PC-9 (cell line): ENCODE measurements at regions of chr4 and their contacts with region 1.

Region 1: DNA sequence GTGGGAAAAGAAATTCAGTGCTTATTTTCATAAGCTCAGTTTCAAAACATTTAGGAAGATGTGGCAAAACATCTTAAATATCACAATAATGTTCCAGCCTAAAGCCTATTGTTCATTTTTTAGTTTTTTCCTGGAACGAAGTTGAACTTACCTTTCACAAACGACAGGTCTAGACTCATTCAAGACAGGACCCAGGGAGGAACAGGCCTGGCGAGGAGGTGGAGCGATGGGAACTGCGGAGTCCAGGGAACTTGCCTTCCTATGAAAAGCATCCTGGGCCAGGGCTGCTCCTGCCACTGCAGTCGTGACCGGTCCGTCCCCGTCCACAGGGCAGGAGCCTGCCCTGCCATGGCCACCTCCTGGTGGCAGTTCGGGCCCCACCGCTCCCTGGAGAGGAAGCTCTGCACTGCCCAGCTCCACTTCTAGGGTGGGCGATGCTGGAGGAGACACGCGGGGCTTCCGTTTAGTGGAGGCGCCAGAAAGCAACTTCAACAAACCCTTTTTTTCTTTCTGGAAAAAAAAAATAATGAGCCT is 96.7 kb upstream of the CBR4 start:
- DNase-seq: no peak
- H3K4me3 ChIP-seq: no peak overlapping the region
- H3K27ac ChIP-seq: no peak overlapping the region
- H3K4me1 ChIP-seq: 0 out of 2 replicates have a peak, but pooled peaks cover 12% of the 10 kb centered on the region
- H3K27me3 ChIP-seq: no peaks in the 10 kb centered on the region
- CTCF ChIP-seq: no peak

Region 2: DNA sequence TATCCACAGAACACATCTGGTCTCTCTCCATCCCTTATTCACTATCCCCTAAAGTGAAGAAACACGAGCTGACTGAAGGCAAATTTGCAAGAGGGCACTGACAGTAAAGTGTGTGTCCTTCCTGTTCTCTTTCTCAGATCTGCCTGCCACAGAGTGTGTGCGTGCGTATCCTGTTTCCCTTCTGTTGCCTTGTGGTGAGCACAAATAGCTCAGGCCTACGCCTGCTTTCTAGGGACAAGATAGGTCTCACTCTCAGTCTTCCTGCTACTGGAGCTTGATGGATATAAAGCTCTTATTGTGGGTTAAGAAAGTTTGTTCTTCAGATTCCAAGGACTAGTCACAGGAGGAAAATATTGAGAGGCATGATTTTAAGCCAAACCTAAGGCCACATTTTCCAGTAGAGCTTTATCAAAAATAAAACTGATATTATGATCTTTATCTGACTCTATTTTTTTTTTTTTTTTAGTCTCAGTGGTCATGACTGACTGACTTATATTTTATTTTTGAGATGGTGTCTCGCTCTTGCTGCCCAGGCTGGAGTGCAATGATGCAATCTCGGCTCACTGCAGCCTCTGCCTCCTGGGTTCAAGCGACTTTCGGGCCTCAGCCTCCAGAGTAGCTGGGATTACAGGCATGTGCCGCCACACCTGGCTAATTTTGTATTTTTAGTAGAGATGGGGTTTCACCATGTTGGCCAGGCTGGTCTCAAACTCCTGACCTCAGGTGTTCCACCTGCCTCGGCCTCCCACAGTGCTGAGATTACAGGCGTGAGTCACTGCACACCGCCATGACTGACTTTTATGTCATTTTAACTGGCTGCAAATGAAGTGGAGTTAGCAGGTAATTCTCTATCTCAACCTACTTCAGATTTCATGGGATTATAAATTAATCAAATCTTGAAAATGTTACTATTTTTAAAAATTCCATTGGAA is 304.3 kb after region 1 on chr4:
- CTCF ChIA-PET with region 1: no interaction called
- POLR2A ChIA-PET with region 1: interaction called, 10 read pairs
- intact Hi-C with region 1: no loop called
- DNase-seq: peak in 1 of 2 experiments; percentile 5
- H3K4me3 ChIP-seq: no peak overlapping the region
- H3K27ac ChIP-seq: no peak overlapping the region
- H3K4me1 ChIP-seq: peaks cover 18% of the 10 kb centered on the region
- H3K27me3 ChIP-seq: no peaks in the 10 kb centered on the region
- CTCF ChIP-seq: no peak

Region 3: GRCh38 chr4:169690787-169691186 is 584.0 kb after region 1 on chr4:
- CTCF ChIA-PET with region 1: no interaction called
- POLR2A ChIA-PET with region 1: no interaction called
- intact Hi-C with region 1: no loop called
- DNase-seq: no peak
- H3K4me3 ChIP-seq: no peak overlapping the region
- H3K27ac ChIP-seq: no peak overlapping the region
- H3K4me1 ChIP-seq: no peaks in the 10 kb centered on the region
- H3K27me3 ChIP-seq: no peaks in the 10 kb centered on the region
- CTCF ChIP-seq: no peak